ENCODE measurements at regions of chr3 and their contacts with region 1.

Region 1: DNA sequence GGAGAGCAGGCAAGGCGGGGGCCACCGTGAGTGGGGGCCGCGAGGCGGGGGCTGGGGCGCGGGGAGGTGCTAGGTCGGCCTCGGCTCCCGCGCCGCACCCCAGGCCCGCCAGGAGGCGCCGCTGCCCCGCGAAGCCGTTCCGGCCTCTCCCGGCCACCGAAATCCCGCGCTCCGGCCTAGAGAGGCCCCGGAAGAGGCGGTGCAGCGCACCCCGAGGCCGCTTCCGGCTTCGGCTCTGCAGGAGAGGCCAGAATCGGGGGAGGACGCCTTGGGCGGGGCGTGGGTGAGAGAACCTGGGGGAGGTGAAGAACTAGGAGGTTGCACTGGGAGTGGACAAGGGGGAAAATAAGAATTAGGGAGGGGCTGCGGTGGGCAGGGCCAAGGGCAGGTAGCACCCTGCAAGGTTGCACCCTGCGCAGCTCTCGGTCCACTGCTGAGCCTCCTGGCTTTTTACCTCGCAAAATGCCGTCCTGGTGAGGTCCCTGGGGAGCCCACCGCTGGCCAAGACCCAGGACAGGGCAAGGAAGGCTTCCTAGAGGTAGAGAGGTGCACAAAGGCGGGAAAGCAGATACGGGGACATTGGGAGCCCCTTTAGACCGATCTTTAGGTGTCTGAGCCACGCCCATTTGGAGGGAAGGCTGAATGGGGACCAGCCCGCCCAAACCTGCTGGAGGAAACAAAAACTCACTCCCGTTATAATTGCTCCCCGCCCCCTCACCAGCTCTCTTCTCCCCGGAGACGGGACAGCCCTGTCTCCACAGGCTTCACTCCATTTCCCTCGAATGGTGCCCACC is 8.4 kb upstream of the GNAI2 start:
- DNase-seq: peak; percentile 89 to 93
- H3K4me3 ChIP-seq: peak overlapping the region; percentile 35 to 60
- H3K27ac ChIP-seq: peak overlapping the region; percentile 78 to 82
- H3K4me1 ChIP-seq: no peaks in the 10 kb centered on the region
- H3K27me3 ChIP-seq: no peaks in the 10 kb centered on the region
- CTCF ChIP-seq: peak; percentile 85 to 98 (median 96)
- POLR2A ChIP-seq: peak; percentile 37 to 51

Region 2: GRCh38 chr3:50272911-50273693 is 45.5 kb after region 1 on chr3:
- intact Hi-C with region 1: loop called (anchors 5 kb)
- DNase-seq: peak; percentile 87 to 90
- H3K4me3 ChIP-seq: peak overlapping the region; percentile 2 to 5
- H3K27ac ChIP-seq: peak overlapping the region; percentile 97 to 99
- H3K4me1 ChIP-seq: peaks cover 0 to 24% of the 10 kb centered on the region in 2 donors
- H3K27me3 ChIP-seq: no peaks in the 10 kb centered on the region
- CTCF ChIP-seq: peak; percentile 96 to 100 (median 98)
- POLR2A ChIP-seq: peak in 1 of 2 donors; percentile 47

Region 3: GRCh38 chr3:50337191-50337841 is 109.7 kb after region 1 on chr3:
- intact Hi-C with region 1: no loop called
- DNase-seq: peak; percentile 99 to 100
- H3K4me3 ChIP-seq: peak overlapping the region; percentile 65 to 79
- H3K27ac ChIP-seq: peak overlapping the region; percentile 94 to 99
- H3K4me1 ChIP-seq: peaks cover 4 to 6% of the 10 kb centered on the region in 2 donors
- H3K27me3 ChIP-seq: no peaks in the 10 kb centered on the region
- CTCF ChIP-seq: peak in 1 of 4 experiments; percentile 2
- POLR2A ChIP-seq: peak; percentile 93 to 95

Measured in uterus (tissue), 4 donors.